Mammary epithelial cell (primary cell): ENCODE measurements at regions of chr22 and their contacts with region 1.

Region 1: DNA sequence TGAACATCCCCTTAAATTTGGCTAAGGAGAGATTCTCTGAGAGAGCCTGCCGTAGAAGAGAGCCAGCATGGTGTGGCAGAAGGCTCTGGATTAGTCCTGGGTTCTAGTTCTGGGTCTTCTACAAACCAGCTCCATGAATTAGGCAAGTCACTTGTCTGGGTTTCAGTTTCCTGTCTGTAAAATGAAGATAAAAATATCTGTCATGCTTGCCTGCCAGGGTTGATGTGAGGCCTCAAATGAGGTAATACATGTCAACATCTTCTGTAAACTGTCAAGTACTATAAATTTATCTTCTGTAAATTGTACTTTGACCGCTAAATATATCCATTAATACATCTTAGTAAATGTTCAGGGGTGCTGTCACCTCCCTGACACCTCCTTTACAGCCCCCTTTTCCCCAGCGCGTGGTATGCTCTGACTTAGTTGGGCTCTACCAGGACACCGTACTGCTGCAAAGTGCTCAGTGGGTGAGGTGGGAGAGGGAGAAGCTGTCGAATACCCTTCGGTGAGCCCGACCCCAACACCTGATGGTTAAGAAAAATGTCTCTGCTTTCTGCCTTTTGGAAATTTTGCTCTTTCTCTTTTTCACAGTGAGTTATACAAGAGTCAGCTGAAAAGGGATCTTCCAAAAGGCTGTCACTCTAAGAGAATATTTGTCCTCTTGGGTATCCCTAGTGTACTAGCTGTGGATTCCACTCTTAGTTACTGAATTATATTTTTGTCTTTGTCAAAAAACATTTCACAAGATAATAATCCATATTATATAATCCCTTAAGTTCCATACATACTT is 15.0 kb downstream of the RBX1 start:
- DNase-seq: no peak
- H3K4me3 ChIP-seq: no peak overlapping the region
- H3K27ac ChIP-seq: no peak overlapping the region
- H3K4me1 ChIP-seq: no peaks in the 10 kb centered on the region
- H3K27me3 ChIP-seq: no peaks in the 10 kb centered on the region
- CTCF ChIP-seq: no peak

Region 2: DNA sequence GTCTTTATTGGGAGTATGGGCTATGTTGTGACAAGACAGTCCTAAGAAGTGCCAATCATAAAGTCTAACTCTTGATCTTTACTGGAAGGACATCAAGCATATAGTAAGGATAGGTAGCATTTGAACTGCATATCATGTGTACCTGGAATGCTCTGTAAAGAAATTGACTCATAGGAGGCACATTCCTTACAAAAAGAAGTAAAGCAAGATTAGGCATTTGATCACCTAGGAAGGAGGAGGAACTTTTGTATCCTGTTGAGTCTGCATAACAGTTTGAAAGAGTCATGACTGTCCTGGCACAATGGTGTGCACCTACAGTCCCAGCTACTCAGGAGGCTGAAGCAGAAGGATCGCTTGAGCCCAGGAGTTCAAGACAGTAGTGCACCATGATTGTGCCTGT is 62.0 kb before region 1 on chr22:
- CTCF ChIA-PET with region 1: no interaction called
- dilution Hi-C with region 1: no loop called
- in situ Hi-C with region 1: no loop called
- intact Hi-C with region 1: no loop called
- DNase-seq: peak; percentile 37
- H3K4me3 ChIP-seq: no peak overlapping the region
- H3K27ac ChIP-seq: no peak overlapping the region
- H3K4me1 ChIP-seq: peaks cover 8% of the 10 kb centered on the region
- H3K27me3 ChIP-seq: no peaks in the 10 kb centered on the region
- CTCF ChIP-seq: no peak

Region 3: GRCh38 chr22:41001722-41002122 is 35.6 kb after region 1 on chr22:
- CTCF ChIA-PET with region 1: no interaction called
- dilution Hi-C with region 1: loop called (anchors 5 kb)
- in situ Hi-C with region 1: no loop called
- intact Hi-C with region 1: no loop called
- DNase-seq: peak; percentile 82
- H3K4me3 ChIP-seq: no peak overlapping the region
- H3K27ac ChIP-seq: no peak overlapping the region
- H3K4me1 ChIP-seq: peaks cover 5% of the 10 kb centered on the region
- H3K27me3 ChIP-seq: no peaks in the 10 kb centered on the region
- CTCF ChIP-seq: no peak